ENCODE measurements at regions of chr17 and their contacts with region 1.

Region 1: GRCh38 chr17:37430051-37430627 is 23.5 kb downstream of the TADA2A start:
- DNase-seq: peak; percentile 59
- H3K4me3 Mint-ChIP-seq: peak overlapping the region; percentile 17
- H3K27ac Mint-ChIP-seq: peak overlapping the region; percentile 88
- H3K4me1 Mint-ChIP-seq: peaks cover 10% of the 10 kb centered on the region
- H3K27me3 Mint-ChIP-seq: no peaks in the 10 kb centered on the region
- CTCF ChIP-seq: no peak

Region 2: GRCh38 chr17:37299257-37299980 is 130.7 kb before region 1 on chr17:
- CTCF ChIA-PET with region 1: no interaction called
- POLR2A ChIA-PET with region 1: no interaction called
- intact Hi-C with region 1: no loop called
- DNase-seq: no peak
- H3K4me3 Mint-ChIP-seq: no peak overlapping the region
- H3K27ac Mint-ChIP-seq: peak overlapping the region; percentile 91
- H3K4me1 Mint-ChIP-seq: peaks cover 28% of the 10 kb centered on the region
- H3K27me3 Mint-ChIP-seq: no peaks in the 10 kb centered on the region
- CTCF ChIP-seq: no peak

Region 3: DNA sequence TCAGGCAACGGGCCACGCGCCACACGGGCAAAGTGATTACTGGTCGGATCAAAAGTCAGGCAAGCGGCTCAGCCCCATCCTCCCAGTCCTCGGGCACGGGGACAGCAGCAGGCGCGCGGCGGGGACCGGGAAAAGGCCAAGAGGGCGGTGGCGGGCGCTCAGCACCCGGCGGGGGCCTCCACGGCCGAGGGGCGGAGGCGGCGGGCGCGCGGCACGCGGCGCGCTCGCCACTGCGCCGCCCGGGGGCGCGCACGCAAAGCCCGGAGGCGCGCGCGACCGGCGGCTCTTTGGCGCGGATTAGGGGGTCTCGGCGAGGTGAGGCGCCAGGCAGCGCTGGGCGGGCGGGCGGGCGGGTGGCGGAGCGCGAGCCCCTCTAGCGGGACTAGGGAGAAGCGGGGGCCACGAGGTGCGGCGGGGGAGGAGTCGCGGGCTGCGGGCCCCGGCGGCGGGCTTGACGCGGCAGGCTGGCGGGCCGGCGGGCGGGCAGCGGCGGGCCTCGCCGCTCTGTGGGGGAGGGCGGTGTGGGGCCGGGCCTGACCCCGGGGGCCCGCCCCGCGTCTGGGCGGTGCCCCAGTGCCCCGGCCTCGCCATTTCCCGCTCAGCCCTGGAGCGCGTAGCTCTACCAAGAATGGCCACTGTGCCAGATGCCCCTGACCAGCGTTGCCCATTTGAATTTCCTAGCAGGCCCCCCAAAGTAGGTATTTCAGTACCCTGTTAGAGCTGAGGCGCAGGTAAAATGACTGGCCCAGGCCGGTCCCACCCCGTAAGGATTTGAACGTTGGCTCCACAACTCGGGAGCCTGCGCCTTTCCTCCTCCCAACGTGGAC is 23.3 kb before region 1 on chr17 and contains the starts of genes ACACA and TADA2A:
- CTCF ChIA-PET with region 1: interaction called, 6 read pairs
- POLR2A ChIA-PET with region 1: interaction called, 111 read pairs
- intact Hi-C with region 1: no loop called
- DNase-seq: peak; percentile 81
- H3K4me3 Mint-ChIP-seq: peak within 1 kb of the TSS; percentile 95
- H3K27ac Mint-ChIP-seq: peak within 1 kb of the TSS; percentile 52
- H3K4me1 Mint-ChIP-seq: peaks cover 10% of the 10 kb centered on the region
- H3K27me3 Mint-ChIP-seq: no peaks in the 10 kb centered on the region
- CTCF ChIP-seq: no peak
- total RNA-seq, gene ACACA: 88.6 and 100 TPM in 2 replicates
- total RNA-seq, gene TADA2A: 25.3 and 31.3 TPM in 2 replicates

Region 4: DNA sequence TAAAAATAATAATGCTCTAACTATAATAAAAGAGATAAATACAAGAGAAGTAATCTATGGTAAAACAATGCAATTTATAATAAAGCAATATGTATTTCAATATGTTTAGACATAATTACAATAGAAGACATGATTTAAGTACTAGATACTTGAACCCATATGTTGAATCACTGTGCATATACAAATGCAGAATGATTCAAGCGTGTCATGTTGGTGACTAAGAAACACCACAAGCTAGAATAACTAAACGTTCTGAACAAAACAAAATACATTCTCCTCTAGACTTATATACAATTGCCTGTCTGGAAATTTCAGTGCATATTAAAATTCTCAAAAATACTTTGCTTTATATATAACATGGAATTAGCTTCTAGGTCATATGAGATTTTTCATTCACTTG is 12.3 kb before region 1 on chr17:
- CTCF ChIA-PET with region 1: interaction called, 4 read pairs
- POLR2A ChIA-PET with region 1: interaction called, 11 read pairs
- intact Hi-C with region 1: no loop called
- DNase-seq: no peak
- H3K4me3 Mint-ChIP-seq: no peak overlapping the region
- H3K27ac Mint-ChIP-seq: no peak overlapping the region
- H3K4me1 Mint-ChIP-seq: no peaks in the 10 kb centered on the region
- H3K27me3 Mint-ChIP-seq: no peaks in the 10 kb centered on the region
- CTCF ChIP-seq: no peak

Region 5: DNA sequence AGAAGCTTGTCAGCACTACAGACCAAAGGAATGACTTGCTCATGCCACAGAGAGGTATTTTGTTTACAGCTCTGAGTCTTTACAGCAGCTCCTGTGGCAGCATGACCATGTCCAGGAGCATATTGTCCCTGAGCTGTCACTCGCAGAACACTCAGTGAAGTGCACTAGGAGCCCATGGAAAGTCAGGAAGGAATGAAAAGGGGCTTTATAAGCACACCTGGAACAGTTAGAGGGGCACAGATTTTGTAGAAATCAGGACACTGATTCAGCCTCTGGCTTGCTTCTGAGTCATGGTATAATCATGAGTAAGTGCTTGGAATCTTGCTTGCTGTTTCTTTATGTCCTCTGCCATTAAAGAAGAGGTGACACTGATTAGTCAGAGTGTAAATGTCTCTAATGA is 17.5 kb after region 1 on chr17:
- CTCF ChIA-PET with region 1: interaction called, 4 read pairs
- POLR2A ChIA-PET with region 1: interaction called, 31 read pairs
- intact Hi-C with region 1: no loop called
- DNase-seq: peak; percentile 29
- H3K4me3 Mint-ChIP-seq: no peak overlapping the region
- H3K27ac Mint-ChIP-seq: peak overlapping the region; percentile 33
- H3K4me1 Mint-ChIP-seq: peaks cover 22% of the 10 kb centered on the region
- H3K27me3 Mint-ChIP-seq: no peaks in the 10 kb centered on the region
- CTCF ChIP-seq: no peak

Region 6: DNA sequence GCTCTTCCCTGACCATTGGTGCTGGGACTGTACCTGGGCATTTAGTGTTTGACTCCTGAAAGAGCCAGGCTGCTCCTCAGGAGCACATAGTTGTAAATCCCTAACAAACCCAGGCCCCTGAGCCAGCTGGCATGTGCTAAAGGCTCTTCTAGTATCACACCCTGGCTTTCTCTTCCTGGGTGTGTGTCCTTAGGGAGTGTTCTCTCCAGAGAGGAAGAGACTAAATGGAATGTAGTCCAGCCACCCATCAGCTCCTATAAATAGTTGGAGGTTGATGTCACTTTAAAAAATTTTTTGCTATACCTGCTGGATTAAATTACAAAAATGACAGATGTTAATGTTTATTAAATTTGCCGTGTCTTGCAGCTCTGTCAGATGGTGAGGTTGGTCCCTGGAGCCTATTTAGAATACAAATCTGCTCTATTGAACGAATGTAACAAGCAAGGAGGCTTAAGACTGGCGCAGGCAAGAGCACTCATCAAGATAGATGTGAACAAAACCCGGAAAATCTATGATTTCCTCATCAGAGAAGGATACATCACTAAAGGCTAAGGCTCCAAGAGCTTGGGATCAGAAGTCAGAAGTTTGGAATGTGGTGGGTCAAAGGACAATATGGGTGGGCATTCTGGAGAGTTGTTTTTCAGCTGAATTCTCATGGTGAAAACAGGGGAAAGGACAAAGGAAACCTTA is 46.4 kb after region 1 on chr17:
- CTCF ChIA-PET with region 1: interaction called, 5 read pairs
- POLR2A ChIA-PET with region 1: interaction called, 14 read pairs
- intact Hi-C with region 1: no loop called
- DNase-seq: no peak
- H3K4me3 Mint-ChIP-seq: no peak overlapping the region
- H3K27ac Mint-ChIP-seq: peak overlapping the region; percentile 75
- H3K4me1 Mint-ChIP-seq: peaks cover 27% of the 10 kb centered on the region
- H3K27me3 Mint-ChIP-seq: no peaks in the 10 kb centered on the region
- CTCF ChIP-seq: no peak

Region 7: GRCh38 chr17:37661400-37662014 is 231.4 kb after region 1 on chr17:
- CTCF ChIA-PET with region 1: no interaction called
- POLR2A ChIA-PET with region 1: no interaction called
- intact Hi-C with region 1: no loop called
- DNase-seq: no peak
- H3K4me3 Mint-ChIP-seq: no peak overlapping the region
- H3K27ac Mint-ChIP-seq: no peak overlapping the region
- H3K4me1 Mint-ChIP-seq: no peaks in the 10 kb centered on the region
- H3K27me3 Mint-ChIP-seq: no peaks in the 10 kb centered on the region
- CTCF ChIP-seq: no peak

Measured in MCF 10A (cell line).